Activated B cell treated with CpG ODN at 0.5 μM for 24 hours (primary cell): ENCODE measurements at regions of chr5 and their contacts with region 1.

Region 1: DNA sequence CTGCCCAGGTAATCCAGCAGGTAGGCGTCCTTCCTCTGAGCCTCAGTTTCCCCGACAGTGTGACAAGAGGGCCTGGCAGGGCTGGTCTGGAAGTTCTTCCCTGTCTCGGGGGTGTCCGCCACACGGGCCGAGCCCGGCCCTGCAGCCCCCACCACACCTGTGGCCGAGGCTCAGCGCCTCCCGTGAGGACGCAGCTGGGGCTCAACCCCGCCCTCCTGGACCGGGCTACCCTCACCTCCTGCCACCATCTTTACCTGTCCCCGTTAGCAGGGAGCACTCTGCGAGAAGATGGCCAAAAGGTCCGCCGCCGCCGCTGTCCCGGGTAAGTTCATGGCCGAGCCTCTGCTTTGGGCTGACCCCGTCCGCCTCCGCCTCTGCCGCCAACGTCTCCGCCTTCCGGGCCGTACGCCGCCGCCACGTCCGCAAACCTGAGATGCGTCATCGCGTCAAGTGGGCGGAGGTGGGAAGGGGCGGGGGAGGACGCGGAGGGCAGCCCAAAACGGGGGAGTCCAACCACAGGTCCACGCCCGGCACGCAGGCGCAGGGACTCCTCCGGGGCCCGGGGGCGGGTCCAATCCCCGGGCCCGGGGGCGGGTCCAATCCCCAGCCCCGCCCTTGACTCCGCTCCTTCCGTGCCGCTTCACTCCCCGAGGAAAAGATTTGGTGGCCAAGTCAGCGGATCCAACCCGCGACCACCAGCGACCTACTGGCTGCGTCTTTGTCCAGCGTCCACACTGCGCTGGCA is at the start of gene LYSMD3:
- DNase-seq: peak; percentile 95
- ATAC-seq: peak; percentile 93
- H3K4me3 Mint-ChIP-seq: peak within 1 kb of the TSS; percentile 100
- H3K27ac Mint-ChIP-seq: peak within 1 kb of the TSS; percentile 97
- H3K4me1 Mint-ChIP-seq: peaks cover 33% of the 10 kb centered on the region
- H3K27me3 Mint-ChIP-seq: peaks cover 20% of the 10 kb centered on the region
- CTCF ChIP-seq: no peak
- total RNA-seq, gene LYSMD3: 18.3 and 18.4 TPM in 2 replicates

Region 2: DNA sequence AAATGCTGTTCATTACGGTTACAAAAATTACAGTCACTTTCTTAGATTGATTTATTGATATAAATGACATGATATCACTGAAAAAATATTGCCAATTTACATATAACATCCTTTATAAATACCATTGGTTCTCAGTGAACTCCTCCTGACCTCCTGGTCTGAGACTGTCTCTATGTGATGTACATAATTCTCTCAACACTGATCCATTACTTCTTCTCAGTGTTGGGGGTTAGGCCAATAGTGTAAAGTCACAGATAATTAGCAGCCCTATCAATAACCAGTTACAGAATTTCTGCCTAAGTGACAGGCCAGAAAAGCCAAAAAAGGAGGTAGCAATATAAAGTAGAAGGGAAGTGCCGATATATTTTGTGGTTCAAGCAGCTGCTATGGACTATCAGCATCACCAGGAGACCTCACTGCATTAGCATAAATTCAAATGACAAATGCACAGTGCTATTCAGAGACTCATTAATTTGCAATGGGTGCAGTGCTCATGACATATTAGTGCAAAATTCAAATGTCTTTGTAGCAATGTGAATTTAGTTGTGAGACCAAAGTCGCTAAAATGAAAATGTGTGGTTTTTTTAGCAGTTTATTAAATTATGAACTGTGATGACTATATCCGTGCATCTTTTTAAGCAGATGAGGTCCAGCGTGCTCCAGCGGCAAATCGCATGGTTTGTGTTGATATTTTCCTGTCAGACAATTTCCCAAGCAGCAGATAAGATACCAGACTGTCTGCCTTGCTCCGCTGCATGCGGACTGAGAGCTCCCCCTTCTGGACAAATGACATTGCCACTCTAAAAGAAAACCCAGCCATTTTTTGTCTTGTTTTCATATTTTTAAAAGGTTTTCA is 264.4 kb before region 1 on chr5:
- CTCF ChIA-PET with region 1: no interaction called
- POLR2A ChIA-PET with region 1: no interaction called
- intact Hi-C with region 1: loop called (anchors 5 kb)
- DNase-seq: peak; percentile 28
- ATAC-seq: peak; percentile 68
- H3K4me3 Mint-ChIP-seq: peak overlapping the region; percentile 48
- H3K27ac Mint-ChIP-seq: no peak overlapping the region
- H3K4me1 Mint-ChIP-seq: peaks cover 6% of the 10 kb centered on the region
- H3K27me3 Mint-ChIP-seq: peaks cover 3% of the 10 kb centered on the region
- CTCF ChIP-seq: peak; percentile 92

Region 3: DNA sequence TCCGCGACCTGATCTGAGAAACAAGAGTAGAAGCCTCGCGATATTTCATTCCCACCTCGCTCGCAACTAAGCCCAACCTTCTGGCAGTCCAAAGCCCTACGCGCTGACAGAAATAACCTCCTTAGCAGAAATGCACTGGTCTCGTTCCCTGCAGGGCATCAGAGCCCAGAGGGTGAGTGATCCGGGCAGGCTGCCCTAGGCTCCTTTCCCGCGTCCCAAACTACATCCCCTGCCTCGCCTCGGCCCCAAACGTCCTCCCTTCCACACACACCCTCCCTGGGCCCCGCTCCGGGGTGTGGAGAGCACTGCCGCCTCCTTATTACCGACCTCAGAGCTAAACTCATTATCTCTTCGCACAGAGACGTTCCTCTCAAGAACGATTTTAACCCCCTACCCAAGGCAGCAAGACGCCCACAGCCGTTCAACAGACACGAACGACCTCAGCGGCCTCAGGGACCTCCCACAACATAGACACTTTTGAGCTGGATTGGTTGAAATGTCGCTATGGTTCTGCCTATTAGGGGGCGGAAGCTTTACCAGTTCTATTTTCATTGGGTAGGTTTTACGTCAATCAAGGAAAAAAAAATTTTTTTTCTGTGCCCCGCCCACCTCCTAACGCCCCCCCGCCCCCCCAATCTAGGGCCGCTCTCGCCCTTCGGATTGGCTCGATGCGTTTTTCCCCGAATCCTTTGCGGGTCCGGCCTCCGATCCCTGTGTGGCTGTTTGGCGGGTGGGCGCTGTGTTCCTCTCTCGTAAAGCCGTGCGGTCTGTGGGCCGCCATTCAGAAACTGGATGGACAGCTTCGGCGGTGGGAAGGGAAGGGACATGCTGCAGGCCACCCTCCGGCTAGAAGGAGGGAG is 119.8 kb before region 1 on chr5 and contains the start of gene CETN3:
- CTCF ChIA-PET with region 1: interaction called, 6 read pairs
- POLR2A ChIA-PET with region 1: interaction called, 31 read pairs
- intact Hi-C with region 1: loop called (anchors 1 kb)
- DNase-seq: peak; percentile 79
- ATAC-seq: peak; percentile 93
- H3K4me3 Mint-ChIP-seq: no peak within 1 kb of the TSS
- H3K27ac Mint-ChIP-seq: no peak within 1 kb of the TSS
- H3K4me1 Mint-ChIP-seq: peaks cover 11% of the 10 kb centered on the region
- H3K27me3 Mint-ChIP-seq: no peaks in the 10 kb centered on the region
- CTCF ChIP-seq: no peak
- total RNA-seq, gene CETN3: 19.1 and 20.3 TPM in 2 replicates

Region 4: DNA sequence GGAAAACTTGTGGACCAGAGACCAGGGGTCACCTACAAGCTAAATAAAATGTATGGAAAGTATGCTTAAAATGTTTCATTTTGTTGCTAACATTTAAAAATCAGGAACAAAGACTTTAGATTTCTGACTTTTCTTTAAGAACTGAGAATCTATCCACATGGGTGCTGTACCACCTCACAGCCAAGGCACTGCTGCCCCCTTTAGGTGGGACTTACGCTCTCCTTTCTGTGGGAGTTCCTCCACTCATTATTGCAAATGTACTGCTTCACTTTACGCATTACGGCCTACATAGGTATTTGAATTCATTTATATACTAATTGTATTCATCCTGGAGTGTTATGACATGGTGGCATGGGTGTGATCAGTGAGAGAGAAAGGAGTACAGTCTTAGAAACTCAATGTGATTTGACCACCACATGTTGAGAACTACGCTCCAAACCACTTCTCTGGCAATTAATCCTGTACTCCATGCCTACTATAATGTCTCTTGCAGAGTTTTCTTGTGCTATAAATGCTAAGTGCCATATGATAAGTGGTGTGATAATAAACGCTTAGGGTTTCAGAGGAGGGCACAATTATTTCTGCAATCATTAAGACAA is 95.2 kb before region 1 on chr5:
- CTCF ChIA-PET with region 1: interaction called, 25 read pairs
- POLR2A ChIA-PET with region 1: no interaction called
- intact Hi-C with region 1: loop called (anchors 1 kb)
- DNase-seq: no peak
- ATAC-seq: peak; percentile 66
- H3K4me3 Mint-ChIP-seq: no peak overlapping the region
- H3K27ac Mint-ChIP-seq: no peak overlapping the region
- H3K4me1 Mint-ChIP-seq: no peaks in the 10 kb centered on the region
- H3K27me3 Mint-ChIP-seq: peaks cover 5% of the 10 kb centered on the region
- CTCF ChIP-seq: no peak

Region 5: DNA sequence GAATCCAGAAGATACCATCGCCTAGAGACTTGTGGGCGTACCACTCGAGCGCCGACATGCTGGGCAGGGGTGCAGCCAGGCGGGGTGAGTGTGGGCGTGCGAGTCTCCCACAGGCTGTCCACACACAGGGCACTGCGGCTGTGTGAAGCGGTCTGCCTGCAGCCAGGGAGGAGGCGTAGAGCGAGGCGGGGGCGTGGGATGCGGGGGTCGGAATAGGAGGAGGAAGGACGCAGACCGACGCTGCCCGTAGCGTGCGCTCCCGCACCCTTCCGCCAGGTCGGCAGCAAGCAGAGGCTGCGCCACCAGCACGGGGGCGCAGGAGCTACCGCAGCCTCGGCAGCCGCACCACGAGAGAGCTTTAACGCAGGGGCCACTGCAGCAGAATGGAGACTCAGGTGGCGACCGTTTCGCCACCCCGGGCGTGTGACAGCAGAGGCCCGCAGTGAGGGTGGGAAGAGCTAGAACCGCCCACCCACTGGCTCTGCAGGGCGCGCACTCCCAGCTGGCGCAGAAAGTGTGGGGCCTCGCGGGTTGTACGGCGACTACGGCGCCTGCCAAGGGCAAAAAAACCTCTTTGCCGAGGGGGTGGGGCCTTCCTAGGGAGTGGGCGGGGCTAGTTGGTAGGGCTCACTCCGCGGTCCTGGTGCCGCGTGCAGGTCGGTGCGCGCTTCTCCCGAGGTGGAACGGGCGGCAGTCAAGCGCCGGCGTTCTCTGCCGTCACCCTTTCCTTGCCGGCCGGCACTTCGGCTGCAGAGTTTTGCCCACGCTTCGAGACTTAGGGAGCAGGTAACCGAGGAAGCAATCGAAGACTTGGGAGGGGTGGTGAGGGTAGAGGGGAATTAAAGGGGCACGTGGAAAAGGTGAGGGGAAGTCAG is 54.9 kb before region 1 on chr5 and contains the starts of genes MBLAC2 and POLR3G:
- CTCF ChIA-PET with region 1: interaction called, 3 read pairs
- POLR2A ChIA-PET with region 1: interaction called, 10 read pairs
- intact Hi-C with region 1: loop called (anchors 1 kb)
- DNase-seq: peak; percentile 86
- ATAC-seq: peak; percentile 91
- H3K4me3 Mint-ChIP-seq: peak within 1 kb of the TSS; percentile 98
- H3K27ac Mint-ChIP-seq: peak within 1 kb of the TSS; percentile 93
- H3K4me1 Mint-ChIP-seq: peaks cover 27% of the 10 kb centered on the region
- H3K27me3 Mint-ChIP-seq: no peaks in the 10 kb centered on the region
- CTCF ChIP-seq: no peak
- total RNA-seq, gene MBLAC2: 6.4 and 7.3 TPM in 2 replicates
- total RNA-seq, gene POLR3G: 2.9 and 3.1 TPM in 2 replicates

Region 6: DNA sequence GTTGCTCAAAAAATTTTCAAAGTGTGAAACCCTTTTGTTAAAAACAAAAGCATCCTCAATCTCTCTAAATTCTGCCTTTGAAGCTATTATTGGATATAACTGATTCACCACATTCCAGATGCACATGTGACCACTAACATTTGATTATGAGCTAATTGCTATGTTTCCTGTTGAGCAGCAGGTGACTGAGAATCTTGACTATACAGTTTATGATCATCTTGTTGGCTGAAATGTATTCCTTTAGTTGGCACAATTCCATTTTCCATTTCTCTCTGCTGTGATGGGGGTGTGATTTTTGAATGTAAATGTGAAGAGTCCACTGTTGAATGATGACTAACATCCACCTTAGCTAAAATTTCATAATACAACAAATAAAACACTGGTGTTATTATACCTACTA is 10.7 kb before region 1 on chr5:
- CTCF ChIA-PET with region 1: no interaction called
- POLR2A ChIA-PET with region 1: no interaction called
- intact Hi-C with region 1: no loop called
- DNase-seq: no peak
- ATAC-seq: no peak
- H3K4me3 Mint-ChIP-seq: no peak overlapping the region
- H3K27ac Mint-ChIP-seq: no peak overlapping the region
- H3K4me1 Mint-ChIP-seq: peaks cover 8% of the 10 kb centered on the region
- H3K27me3 Mint-ChIP-seq: no peaks in the 10 kb centered on the region
- CTCF ChIP-seq: no peak

Region 7: DNA sequence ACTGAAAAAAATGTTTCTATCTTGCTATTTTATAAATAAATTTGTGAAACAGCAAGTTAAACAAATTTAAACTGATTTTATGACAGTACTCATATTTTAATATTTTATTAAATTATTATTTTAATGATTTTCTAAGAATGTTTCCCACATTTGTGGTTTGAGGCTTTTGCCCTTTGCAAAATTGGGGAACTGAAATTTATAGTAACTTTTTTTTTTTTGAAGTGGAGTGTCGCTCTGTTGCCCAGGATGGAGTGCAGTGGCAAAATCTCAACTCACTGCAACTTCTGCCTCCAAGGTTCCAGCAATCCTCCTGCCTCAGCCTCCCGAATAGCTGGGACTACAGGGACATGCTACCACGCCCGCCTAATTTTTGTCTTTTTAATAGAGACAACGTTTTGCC is 22.0 kb after region 1 on chr5:
- CTCF ChIA-PET with region 1: no interaction called
- POLR2A ChIA-PET with region 1: no interaction called
- intact Hi-C with region 1: loop called (anchors 1 kb)
- DNase-seq: no peak
- ATAC-seq: no peak
- H3K4me3 Mint-ChIP-seq: no peak overlapping the region
- H3K27ac Mint-ChIP-seq: peak overlapping the region; percentile 21
- H3K4me1 Mint-ChIP-seq: peaks cover 8% of the 10 kb centered on the region
- H3K27me3 Mint-ChIP-seq: peaks cover 25% of the 10 kb centered on the region
- CTCF ChIP-seq: no peak

Region 8: GRCh38 chr5:90747175-90747574 is 217.8 kb after region 1 on chr5:
- CTCF ChIA-PET with region 1: no interaction called
- POLR2A ChIA-PET with region 1: no interaction called
- intact Hi-C with region 1: no loop called
- DNase-seq: no peak
- ATAC-seq: no peak
- H3K4me3 Mint-ChIP-seq: no peak overlapping the region
- H3K27ac Mint-ChIP-seq: no peak overlapping the region
- H3K4me1 Mint-ChIP-seq: no peaks in the 10 kb centered on the region
- H3K27me3 Mint-ChIP-seq: peaks cover 4% of the 10 kb centered on the region
- CTCF ChIP-seq: no peak

Region 9: GRCh38 chr5:90783460-90784333 is 254.3 kb after region 1 on chr5:
- CTCF ChIA-PET with region 1: no interaction called
- POLR2A ChIA-PET with region 1: no interaction called
- intact Hi-C with region 1: loop called (anchors 5 kb)
- DNase-seq: peak; percentile 25
- ATAC-seq: peak; percentile 68
- H3K4me3 Mint-ChIP-seq: no peak overlapping the region
- H3K27ac Mint-ChIP-seq: no peak overlapping the region
- H3K4me1 Mint-ChIP-seq: no peaks in the 10 kb centered on the region
- H3K27me3 Mint-ChIP-seq: peaks cover 7% of the 10 kb centered on the region
- CTCF ChIP-seq: peak; percentile 71